Psoas muscle (tissue), 8 donors: ENCODE measurements at regions of chr2 and their contacts with region 1.

Region 1: DNA sequence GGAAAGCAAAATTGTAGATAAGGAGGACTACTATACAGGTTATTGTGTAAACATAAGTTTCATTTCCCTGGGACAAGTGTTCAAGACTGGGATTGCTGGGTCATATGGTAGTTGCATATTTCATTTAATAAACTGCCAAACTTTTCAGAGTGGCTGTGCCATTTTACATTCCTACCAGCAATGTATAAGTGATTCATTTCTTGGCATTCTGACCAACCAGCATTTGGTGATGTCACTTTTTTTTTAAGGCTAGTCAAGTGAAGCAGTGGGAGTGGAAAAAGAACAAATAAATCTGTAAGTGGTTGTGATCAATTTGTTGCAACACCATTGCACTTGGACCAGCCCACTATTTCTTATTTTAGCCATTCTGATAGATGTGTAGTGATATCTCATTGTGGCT is 5.2 kb upstream of the CHCHD5 start:
- DNase-seq: no peak
- ATAC-seq: no peak
- H3K4me3 ChIP-seq: no peak overlapping the region
- H3K27ac ChIP-seq: no peak overlapping the region
- H3K4me1 ChIP-seq: peaks cover 8% of the 10 kb centered on the region
- H3K27me3 ChIP-seq: no peaks in the 10 kb centered on the region
- CTCF ChIP-seq: no peak

Region 2: DNA sequence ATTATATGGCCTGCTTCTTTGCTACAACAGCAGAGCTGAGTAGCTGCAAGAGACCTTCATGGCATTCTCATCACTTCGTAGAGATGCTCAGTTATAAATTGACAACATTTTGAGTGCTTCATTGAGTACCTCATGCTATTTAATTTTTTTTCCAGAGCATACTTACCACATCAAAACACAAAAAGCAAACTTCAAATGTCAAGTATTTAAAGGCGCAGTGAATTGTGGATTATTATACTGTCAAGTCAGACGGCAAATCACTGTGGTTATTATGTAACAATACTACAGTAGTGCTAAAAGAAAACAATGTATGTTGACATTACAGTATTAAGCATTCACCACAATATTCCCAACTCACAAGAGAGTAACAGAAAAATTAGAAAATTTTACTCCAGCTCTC is 336.9 kb before region 1 on chr2:
- intact Hi-C with region 1: loop called in 1 of 2 experiments (anchors 10 kb)
- DNase-seq: no peak
- ATAC-seq: no peak
- H3K4me3 ChIP-seq: no peak overlapping the region
- H3K27ac ChIP-seq: no peak overlapping the region
- H3K4me1 ChIP-seq: no peaks in the 10 kb centered on the region
- H3K27me3 ChIP-seq: no peaks in the 10 kb centered on the region
- CTCF ChIP-seq: no peak

Region 3: DNA sequence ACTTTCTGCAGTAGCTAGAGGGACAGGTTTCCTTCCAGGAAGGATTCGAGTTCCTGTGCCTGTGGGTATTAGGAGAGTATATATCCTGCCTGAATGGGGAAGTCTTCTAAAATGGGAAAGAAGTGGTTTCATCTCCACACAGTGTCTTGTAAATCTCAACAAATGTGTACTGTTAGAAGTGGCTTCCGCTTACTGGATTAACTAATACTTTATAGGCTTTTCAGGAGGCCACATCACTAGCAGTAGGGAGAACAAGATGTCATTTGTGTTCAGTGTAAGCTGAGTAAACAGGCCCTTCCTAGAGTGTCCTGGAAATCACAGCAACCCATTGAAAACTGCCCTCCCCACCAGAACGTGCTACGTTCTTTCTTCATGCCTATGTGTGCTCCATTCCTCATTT is 49.5 kb before region 1 on chr2:
- intact Hi-C with region 1: no loop called
- DNase-seq: no peak
- ATAC-seq: no peak
- H3K4me3 ChIP-seq: no peak overlapping the region
- H3K27ac ChIP-seq: no peak overlapping the region
- H3K4me1 ChIP-seq: no peaks in the 10 kb centered on the region
- H3K27me3 ChIP-seq: no peaks in the 10 kb centered on the region
- CTCF ChIP-seq: no peak